Activated T-helper 1 cell treated with anti-CD3 and anti-CD28 coated beads, Interleukin-12 subunit alpha, Interleukin-12 subunit beta, Interleukin-2, Interleukin-4 antibody, amounts not matched to agents 30 ng/mL and 10 ng/mL and 1 ng/mL, durations not matched to agents 14 hours and 24 hours and 36 hours (primary cell): ENCODE measurements at regions of chr14 and their contacts with region 1.

Region 1: GRCh38 chr14:58501214-58501816 is 73.8 kb downstream of the KIAA0586 start:
- DNase-seq: peak; percentile 13
- H3K4me3 Mint-ChIP-seq: no peak overlapping the region
- H3K27ac Mint-ChIP-seq: no peak overlapping the region
- H3K4me1 Mint-ChIP-seq: no peaks in the 10 kb centered on the region
- H3K27me3 Mint-ChIP-seq: no peaks in the 10 kb centered on the region

Region 2: DNA sequence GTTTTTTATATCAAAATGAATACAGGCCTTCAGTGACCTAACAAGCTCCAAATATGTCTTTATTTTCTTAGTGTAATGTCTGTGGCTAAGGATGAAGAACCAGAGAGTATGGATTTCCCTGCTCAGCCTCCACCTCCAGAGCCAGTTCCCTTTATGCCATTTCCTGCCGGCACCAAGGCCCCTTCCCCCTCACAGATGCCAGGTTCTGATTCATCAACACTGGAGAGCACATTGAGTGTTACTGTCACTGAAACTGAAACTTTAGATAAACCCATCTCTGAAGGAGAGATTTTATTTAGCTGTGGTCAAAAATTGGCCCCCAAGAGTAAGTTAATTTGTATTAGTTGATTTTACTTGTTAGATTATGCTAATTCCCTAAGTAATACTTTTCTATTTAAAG is 12.8 kb before region 1 on chr14:
- intact Hi-C with region 1: no loop called
- DNase-seq: no peak
- H3K4me3 Mint-ChIP-seq: no peak overlapping the region
- H3K27ac Mint-ChIP-seq: no peak overlapping the region
- H3K4me1 Mint-ChIP-seq: peaks cover 5% of the 10 kb centered on the region
- H3K27me3 Mint-ChIP-seq: no peaks in the 10 kb centered on the region

Region 3: GRCh38 chr14:58571769-58572472 is 70.6 kb after region 1 on chr14:
- intact Hi-C with region 1: loop called (anchors 2 kb)
- DNase-seq: no peak
- H3K4me3 Mint-ChIP-seq: peak overlapping the region; percentile 67
- H3K27ac Mint-ChIP-seq: peak overlapping the region; percentile 88
- H3K4me1 Mint-ChIP-seq: peaks cover 21% of the 10 kb centered on the region
- H3K27me3 Mint-ChIP-seq: peaks cover 2% of the 10 kb centered on the region

Region 4: GRCh38 chr14:59028476-59029202 is 527.3 kb after region 1 on chr14:
- intact Hi-C with region 1: loop called (anchors 10 kb)
- DNase-seq: no peak
- H3K4me3 Mint-ChIP-seq: no peak overlapping the region
- H3K27ac Mint-ChIP-seq: no peak overlapping the region
- H3K4me1 Mint-ChIP-seq: no peaks in the 10 kb centered on the region
- H3K27me3 Mint-ChIP-seq: peaks cover 3% of the 10 kb centered on the region

Region 5: DNA sequence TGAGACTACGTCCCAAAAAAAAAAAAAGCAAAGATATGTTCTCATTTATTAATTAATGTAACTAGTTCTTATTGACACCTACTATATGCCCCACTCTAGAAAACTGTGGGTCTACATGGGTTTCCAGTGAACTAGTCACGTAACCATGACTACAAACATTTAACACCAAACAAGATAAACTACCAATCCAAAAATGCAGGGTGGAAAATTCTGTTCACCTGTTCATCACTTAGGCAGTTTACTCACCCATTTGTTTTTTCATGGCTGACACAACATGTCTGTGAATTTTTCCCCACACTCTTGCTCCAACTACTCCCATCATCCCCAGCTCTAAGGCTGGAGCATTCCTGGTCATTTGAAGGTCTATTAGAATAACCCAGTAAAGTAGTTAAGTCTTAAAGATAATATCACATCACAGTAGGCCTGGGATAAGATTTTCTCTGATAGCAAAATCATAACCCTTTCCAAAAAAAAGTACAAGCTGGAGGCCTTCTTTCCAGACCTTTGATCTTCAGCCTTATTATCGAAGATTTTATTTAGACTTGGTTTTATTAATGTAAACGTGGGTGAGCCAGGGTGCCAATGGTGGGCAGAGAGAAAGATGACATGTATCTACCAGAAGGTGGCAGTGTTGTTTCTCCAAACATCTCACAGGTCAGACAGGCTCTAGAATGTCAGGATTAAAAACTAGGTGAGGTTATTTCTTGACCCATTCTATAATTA is 625.6 kb after region 1 on chr14:
- intact Hi-C with region 1: loop called (anchors 5 kb)
- DNase-seq: peak; percentile 1
- H3K4me3 Mint-ChIP-seq: no peak overlapping the region
- H3K27ac Mint-ChIP-seq: no peak overlapping the region
- H3K4me1 Mint-ChIP-seq: no peaks in the 10 kb centered on the region
- H3K27me3 Mint-ChIP-seq: peaks cover 2% of the 10 kb centered on the region

Region 6: DNA sequence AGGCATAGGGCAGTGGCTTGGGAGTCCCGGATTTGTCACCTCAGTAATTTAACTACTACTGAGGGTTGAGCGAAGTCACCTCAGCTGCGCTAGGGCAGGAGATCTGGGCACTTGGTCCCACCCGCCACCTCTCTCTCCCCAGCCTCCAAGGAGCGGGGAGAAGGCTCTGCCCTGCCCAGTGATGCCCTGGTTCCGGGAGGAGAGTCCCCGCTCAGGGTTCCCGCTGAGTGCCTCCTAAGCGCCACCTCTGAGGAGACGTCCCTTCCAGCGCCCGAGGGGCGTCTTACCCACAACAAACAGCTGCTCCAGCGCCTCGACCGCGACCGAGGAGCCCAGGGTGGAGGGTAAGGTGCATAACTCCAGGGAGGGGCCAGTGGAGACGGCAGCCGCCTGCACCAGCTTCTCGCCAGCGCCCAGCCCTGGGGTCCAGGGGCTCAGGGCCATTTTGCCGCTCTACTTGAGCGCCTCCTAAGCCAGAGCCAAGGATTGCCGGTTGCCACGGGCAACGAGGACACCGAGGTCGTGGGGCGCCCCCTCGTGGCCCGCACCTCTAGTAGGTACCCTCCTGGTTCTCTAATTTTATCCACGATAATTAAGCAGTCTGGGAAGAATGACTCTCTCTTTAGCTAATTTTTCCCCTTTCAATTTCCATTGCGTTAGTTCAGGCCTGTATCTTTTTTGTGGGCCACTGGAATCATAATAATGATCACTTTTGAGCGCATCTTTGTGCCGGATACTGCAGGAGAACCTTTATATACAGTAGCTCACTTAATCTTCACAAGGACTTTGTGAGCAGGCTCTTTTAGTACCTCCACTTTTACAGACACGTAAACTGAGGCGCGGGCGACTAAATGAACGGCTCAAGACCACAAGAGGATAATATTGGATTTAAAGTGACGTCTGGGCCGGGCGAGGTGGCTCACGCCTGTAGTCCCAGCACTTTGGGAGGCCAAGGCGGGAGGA is 1075.3 kb after region 1 on chr14 and contains the start of gene CCDC175:
- intact Hi-C with region 1: loop called (anchors 2 kb)
- DNase-seq: peak; percentile 66
- H3K4me3 Mint-ChIP-seq: peak within 1 kb of the TSS; percentile 76
- H3K27ac Mint-ChIP-seq: no peak within 1 kb of the TSS
- H3K4me1 Mint-ChIP-seq: peaks cover 13% of the 10 kb centered on the region
- H3K27me3 Mint-ChIP-seq: peaks cover 27% of the 10 kb centered on the region
- total RNA-seq, gene CCDC175: not detected in 2 replicates